IMR-90 (cell line): ENCODE measurements at regions of chr6 and their contacts with region 1.

Region 1: GRCh38 chr6:104718672-104719071 is 141.0 kb downstream of the HACE1 start:
- DNase-seq: no peak
- ATAC-seq: no peak
- H3K4me3 ChIP-seq: no peak overlapping the region
- H3K27ac ChIP-seq: no peak overlapping the region
- H3K4me1 ChIP-seq: no peaks in the 10 kb centered on the region
- H3K27me3 ChIP-seq: no peaks in the 10 kb centered on the region
- CTCF ChIP-seq: no peak
- POLR2A ChIP-seq: no peak
- RAD21 ChIP-seq: no peak

Region 2: GRCh38 chr6:105192707-105193465 is 474.2 kb after region 1 on chr6:
- CTCF ChIA-PET with region 1: no interaction called
- POLR2A ChIA-PET with region 1: no interaction called
- dilution Hi-C with region 1: no loop called
- in situ Hi-C with region 1: no loop called
- intact Hi-C with region 1: no loop called
- DNase-seq: peak; percentile 78
- ATAC-seq: peak; percentile 78
- H3K4me3 ChIP-seq: no peak overlapping the region
- H3K27ac ChIP-seq: no peak overlapping the region
- H3K4me1 ChIP-seq: peaks cover 3% of the 10 kb centered on the region
- H3K27me3 ChIP-seq: no peaks in the 10 kb centered on the region
- CTCF ChIP-seq: no peak
- POLR2A ChIP-seq: no peak
- RAD21 ChIP-seq: no peak

Region 3: GRCh38 chr6:105667056-105667455 is 948.4 kb after region 1 on chr6:
- CTCF ChIA-PET with region 1: no interaction called
- POLR2A ChIA-PET with region 1: interaction called, 16 read pairs
- dilution Hi-C with region 1: no loop called
- in situ Hi-C with region 1: no loop called
- intact Hi-C with region 1: no loop called
- DNase-seq: no peak
- ATAC-seq: no peak
- H3K4me3 ChIP-seq: no peak overlapping the region
- H3K27ac ChIP-seq: no peak overlapping the region
- H3K4me1 ChIP-seq: no peaks in the 10 kb centered on the region
- H3K27me3 ChIP-seq: no peaks in the 10 kb centered on the region; the same call in 1 of the 2 replicates
- CTCF ChIP-seq: no peak
- POLR2A ChIP-seq: no peak
- RAD21 ChIP-seq: no peak